ENCODE measurements at regions of chr5 and their contacts with region 1.

Region 1: GRCh38 chr5:134451936-134452505 is 40.3 kb upstream of the CDKN2AIPNL start:
- DNase-seq: peak; percentile 55
- H3K4me3 ChIP-seq: no peak overlapping the region
- H3K27ac ChIP-seq: no peak overlapping the region
- H3K4me1 ChIP-seq: peaks cover 5 to 16% (median 12%) of the 10 kb centered on the region in 4 donors
- H3K27me3 ChIP-seq: no peaks in the 10 kb centered on the region
- CTCF ChIP-seq: no peak
- EP300 ChIP-seq: no peak
- POLR2A ChIP-seq: no peak

Region 2: GRCh38 chr5:134511788-134512650 is 60.0 kb after region 1 on chr5:
- in situ Hi-C with region 1: loop called in 1 of 4 experiments (anchors 10 kb)
- intact Hi-C with region 1: no loop called
- DNase-seq: peak; percentile 73
- H3K4me3 ChIP-seq: no peak overlapping the region
- H3K27ac ChIP-seq: peak overlapping the region; percentile 54 to 78 (median 62)
- H3K4me1 ChIP-seq: peaks cover 10 to 46% (median 31%) of the 10 kb centered on the region in 4 donors
- H3K27me3 ChIP-seq: no peaks in the 10 kb centered on the region
- CTCF ChIP-seq: peak; percentile 20 to 56 (median 29)
- EP300 ChIP-seq: no peak
- POLR2A ChIP-seq: no peak